Activated CD4-positive, alpha-beta memory T cell treated with anti-CD3 and anti-CD28 coated beads, Interleukin-2, amount 10 ng/mL, durations not matched to agents 7 days and 5 days (primary cell): ENCODE measurements at regions of chr1 and their contacts with region 1.

Region 1: DNA sequence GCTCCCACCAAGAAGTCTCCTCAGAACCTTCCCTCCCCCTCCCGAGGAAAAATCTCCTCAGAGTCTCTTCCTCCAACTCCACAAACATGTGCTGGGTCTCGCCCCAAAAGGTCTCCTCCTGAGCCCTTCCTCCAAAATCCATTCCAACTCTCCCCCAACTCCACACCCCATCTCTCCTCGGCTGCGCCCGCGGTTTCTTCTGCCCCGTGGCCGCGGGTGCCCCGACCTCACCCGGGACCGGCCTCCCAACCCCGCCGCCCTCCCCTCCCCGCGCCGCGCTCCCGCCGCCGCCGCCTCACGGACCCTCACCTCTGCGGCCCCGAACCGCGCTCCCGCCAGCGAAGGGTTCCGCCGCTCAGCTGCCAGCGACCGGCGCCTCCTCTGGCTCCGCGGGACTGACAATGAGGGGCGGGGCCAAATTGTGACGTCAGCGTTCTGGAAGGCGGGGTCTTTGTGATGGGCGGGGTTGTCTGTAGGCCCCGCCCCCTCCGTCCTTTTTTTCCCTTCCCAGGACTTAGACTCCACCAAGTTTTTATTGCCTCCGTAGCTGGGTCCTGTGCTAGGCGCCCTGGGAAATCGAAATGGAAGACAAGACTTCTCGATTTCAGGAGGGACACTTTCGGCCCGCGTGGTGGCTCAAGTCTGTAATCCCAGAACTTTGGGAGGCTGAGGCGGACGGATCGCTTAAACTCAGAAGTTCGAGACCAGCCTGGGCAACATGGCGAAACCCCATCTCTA is at the start of gene LUZP1:
- DNase-seq: peak; percentile 88
- H3K4me3 Mint-ChIP-seq: peak within 1 kb of the TSS; percentile 91
- H3K27ac Mint-ChIP-seq: peak within 1 kb of the TSS; percentile 74
- H3K4me1 Mint-ChIP-seq: peaks cover 28% of the 10 kb centered on the region
- H3K27me3 Mint-ChIP-seq: peaks cover 2% of the 10 kb centered on the region
- total RNA-seq, gene LUZP1: 19.4 to 21.8 TPM

Region 2: DNA sequence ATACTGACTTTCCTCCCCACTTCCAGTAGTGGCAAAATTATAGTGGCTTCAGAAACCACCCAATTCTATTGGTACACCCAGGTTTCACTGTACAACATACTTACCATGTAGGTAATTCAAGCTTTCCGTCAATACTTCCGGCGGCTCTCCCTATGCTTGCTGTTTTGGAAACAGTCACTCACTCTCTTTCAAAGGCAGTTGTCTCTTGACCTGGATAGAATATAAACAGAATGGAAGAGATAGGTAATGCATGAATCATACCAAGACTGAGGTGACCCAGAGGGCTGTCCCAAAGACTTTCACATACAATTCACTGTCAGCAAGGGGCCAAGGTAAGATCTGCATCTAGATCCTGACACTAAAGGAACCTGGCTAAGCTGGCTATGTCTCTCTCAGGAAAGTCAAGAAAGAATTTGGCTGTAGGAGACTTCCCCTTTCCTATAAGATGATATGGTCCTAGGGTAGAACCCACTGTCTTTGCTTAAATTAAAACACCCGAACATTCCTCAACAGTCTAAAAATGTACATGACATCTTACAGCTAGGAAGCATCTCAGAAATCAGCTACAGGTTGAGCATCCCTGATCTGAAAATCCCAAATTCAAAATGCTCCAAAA is 59.6 kb before region 1 on chr1:
- CTCF ChIA-PET with region 1: interaction called, 6 read pairs
- POLR2A ChIA-PET with region 1: interaction called, 25 read pairs
- DNase-seq: peak; percentile 29
- H3K4me3 Mint-ChIP-seq: no peak overlapping the region
- H3K27ac Mint-ChIP-seq: no peak overlapping the region
- H3K4me1 Mint-ChIP-seq: peaks cover 63% of the 10 kb centered on the region
- H3K27me3 Mint-ChIP-seq: no peaks in the 10 kb centered on the region